Naive thymus-derived CD4-positive, alpha-beta T cell (primary cell): ENCODE measurements at regions of chr12 and their contacts with region 1.

Region 1: DNA sequence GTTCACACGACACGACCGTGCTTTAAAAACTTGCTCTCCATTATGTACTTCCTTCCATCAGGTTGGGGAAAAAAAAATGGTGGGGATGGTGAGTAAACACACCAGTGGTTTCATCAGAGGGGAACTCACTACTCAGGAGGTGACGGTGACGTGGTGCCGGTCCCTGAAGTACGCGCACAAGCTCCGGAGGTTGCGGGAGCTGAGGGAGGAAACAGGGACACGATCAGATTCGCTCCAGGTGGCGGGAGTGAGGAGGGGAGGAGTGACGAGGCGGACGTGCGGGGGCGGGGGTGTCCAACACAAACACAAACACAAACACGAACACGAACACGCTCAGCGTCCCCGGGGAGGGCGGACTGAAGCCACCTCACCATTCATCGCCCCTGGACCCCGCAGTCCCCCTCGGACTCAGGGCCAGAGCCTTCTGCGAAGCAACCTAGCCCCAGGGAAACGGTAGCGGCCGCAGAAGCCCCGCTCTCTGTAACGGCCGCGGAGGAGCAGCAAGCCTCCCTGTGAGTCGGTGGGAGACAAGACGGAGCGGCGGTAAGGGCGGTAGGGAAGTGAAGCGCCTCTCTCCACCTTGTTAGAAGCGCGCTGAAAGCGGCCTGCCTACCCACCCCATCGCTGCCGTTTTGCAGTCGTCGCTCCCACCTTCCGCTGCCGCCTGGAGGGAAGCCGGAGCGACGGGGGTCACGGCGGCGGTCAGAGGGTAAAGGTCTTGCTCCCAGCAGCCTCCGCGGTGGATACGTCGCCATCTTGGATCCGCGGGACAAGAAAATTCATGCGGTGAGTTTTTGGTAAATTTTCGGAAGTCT is at the start of gene CNOT2:
- DNase-seq: peak; percentile 76 to 91 (median 90)
- ATAC-seq: peak; percentile 89
- H3K4me3 ChIP-seq: peak within 1 kb of the TSS; percentile 80
- H3K4me3 Mint-ChIP-seq: peak within 1 kb of the TSS; percentile 96 to 100 (median 98)
- H3K27ac ChIP-seq: peak within 1 kb of the TSS; percentile 99
- H3K27ac Mint-ChIP-seq: peak within 1 kb of the TSS; percentile 94 to 100 (median 99)
- H3K4me1 ChIP-seq: peaks cover 33 to 41% of the 10 kb centered on the region in 2 donors
- H3K4me1 Mint-ChIP-seq: peaks cover 43 to 77% (median 70%) of the 10 kb centered on the region in 7 donors
- H3K27me3 ChIP-seq: no peaks in the 10 kb centered on the region
- H3K27me3 Mint-ChIP-seq: peaks cover 0 to 3% (median 0%) of the 10 kb centered on the region in 5 donors
- total RNA-seq, gene CNOT2: 76.2 to 144 (median 116) TPM

Region 2: DNA sequence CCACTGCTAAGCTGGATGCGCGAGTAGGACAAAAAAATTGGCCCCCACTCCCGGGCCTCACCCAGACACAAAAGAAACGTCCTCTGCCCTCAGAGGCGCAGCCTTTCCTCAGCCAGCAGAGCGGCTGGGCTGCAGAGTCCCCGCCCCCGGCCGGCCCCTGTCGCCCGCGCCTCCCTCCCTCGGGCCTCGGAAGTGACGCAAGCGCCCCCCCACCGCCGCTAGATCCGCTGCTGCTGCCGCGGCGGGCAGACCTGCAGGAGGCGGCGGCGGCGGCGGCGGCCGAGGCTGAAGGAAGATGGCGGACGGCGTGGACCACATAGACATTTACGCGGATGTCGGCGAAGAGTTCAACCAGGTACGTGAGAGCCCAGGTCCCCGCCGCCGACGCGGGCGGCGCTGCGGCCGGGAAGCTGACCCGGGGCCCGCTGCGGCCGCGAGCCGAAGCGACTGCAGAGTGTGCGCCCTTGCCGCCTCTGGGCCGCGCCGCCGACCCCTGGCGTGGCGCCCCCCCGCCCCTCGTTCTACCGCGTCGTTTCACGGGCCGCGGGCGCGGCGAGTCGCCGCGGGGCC is 1003.5 kb before region 1 on chr12 and contains the start of gene CPSF6:
- CTCF ChIA-PET with region 1: no interaction called
- POLR2A ChIA-PET with region 1: no interaction called
- intact Hi-C with region 1: loop called (anchors 2 to 5 kb)
- DNase-seq: peak; percentile 93 to 97 (median 95)
- ATAC-seq: peak; percentile 96
- H3K4me3 ChIP-seq: peak within 1 kb of the TSS; percentile 86
- H3K4me3 Mint-ChIP-seq: peak within 1 kb of the TSS; percentile 94 to 100 (median 98)
- H3K27ac ChIP-seq: peak within 1 kb of the TSS; percentile 90
- H3K27ac Mint-ChIP-seq: peak within 1 kb of the TSS; percentile 96 to 100 (median 99)
- H3K4me1 ChIP-seq: peaks cover 32 to 37% of the 10 kb centered on the region in 2 donors
- H3K4me1 Mint-ChIP-seq: peaks cover 32 to 58% (median 54%) of the 10 kb centered on the region in 7 donors
- H3K27me3 ChIP-seq: no peaks in the 10 kb centered on the region
- H3K27me3 Mint-ChIP-seq: no peaks in the 10 kb centered on the region
- total RNA-seq, gene CPSF6: 86.8 to 127 (median 96.5) TPM

Region 3: GRCh38 chr12:69470189-69471075 is 772.5 kb before region 1 on chr12 and contains the start of gene FRS2:
- CTCF ChIA-PET with region 1: no interaction called
- POLR2A ChIA-PET with region 1: no interaction called
- intact Hi-C with region 1: loop called in 1 of 2 experiments (anchors 1 kb)
- DNase-seq: peak; percentile 66 to 87 (median 81)
- ATAC-seq: peak; percentile 99
- H3K4me3 ChIP-seq: peak within 1 kb of the TSS; percentile 80
- H3K4me3 Mint-ChIP-seq: peak within 1 kb of the TSS; percentile 91 to 100 (median 96)
- H3K27ac ChIP-seq: peak within 1 kb of the TSS; percentile 94
- H3K27ac Mint-ChIP-seq: peak within 1 kb of the TSS; percentile 91 to 99 (median 97)
- H3K4me1 ChIP-seq: peaks cover 11 to 12% of the 10 kb centered on the region in 2 donors
- H3K4me1 Mint-ChIP-seq: peaks cover 41 to 60% (median 51%) of the 10 kb centered on the region in 7 donors
- H3K27me3 ChIP-seq: no peaks in the 10 kb centered on the region
- H3K27me3 Mint-ChIP-seq: no peaks in the 10 kb centered on the region
- total RNA-seq, gene FRS2: 17.5 to 30.1 (median 24.0) TPM

Region 4: DNA sequence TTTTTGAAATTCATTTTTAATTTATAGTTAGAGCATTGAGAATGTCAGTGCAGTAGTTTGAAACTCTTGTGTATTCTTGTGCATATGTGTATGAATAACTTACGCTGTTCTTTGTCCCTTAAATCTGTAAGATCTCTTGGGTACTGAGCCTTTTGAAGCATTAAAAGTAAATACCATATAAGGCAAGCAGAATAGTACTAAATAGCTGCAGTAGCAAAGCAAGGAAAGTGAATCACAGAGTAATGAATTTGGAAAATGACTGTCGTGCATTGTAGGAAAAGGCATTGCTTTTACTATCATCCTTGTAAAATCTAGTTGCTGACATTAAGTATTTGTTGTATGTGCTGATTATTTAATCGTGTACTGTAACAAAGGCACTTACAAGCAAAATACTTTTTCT is 12.4 kb after region 1 on chr12:
- CTCF ChIA-PET with region 1: no interaction called
- POLR2A ChIA-PET with region 1: interaction called, 4 read pairs
- intact Hi-C with region 1: loop called in 1 of 2 experiments (anchors 1 kb)
- DNase-seq: no peak
- ATAC-seq: no peak
- H3K4me3 ChIP-seq: no peak overlapping the region
- H3K4me3 Mint-ChIP-seq: peak overlapping the region in 7 of 10 donors; percentile 12 to 65 (median 49)
- H3K27ac ChIP-seq: no peak overlapping the region
- H3K27ac Mint-ChIP-seq: peak overlapping the region in 4 of 9 donors; percentile 29 to 49 (median 40)
- H3K4me1 ChIP-seq: peaks cover 25 to 32% of the 10 kb centered on the region in 2 donors
- H3K4me1 Mint-ChIP-seq: peaks cover 39 to 96% (median 90%) of the 10 kb centered on the region in 7 donors
- H3K27me3 ChIP-seq: no peaks in the 10 kb centered on the region
- H3K27me3 Mint-ChIP-seq: no peaks in the 10 kb centered on the region

Region 5: DNA sequence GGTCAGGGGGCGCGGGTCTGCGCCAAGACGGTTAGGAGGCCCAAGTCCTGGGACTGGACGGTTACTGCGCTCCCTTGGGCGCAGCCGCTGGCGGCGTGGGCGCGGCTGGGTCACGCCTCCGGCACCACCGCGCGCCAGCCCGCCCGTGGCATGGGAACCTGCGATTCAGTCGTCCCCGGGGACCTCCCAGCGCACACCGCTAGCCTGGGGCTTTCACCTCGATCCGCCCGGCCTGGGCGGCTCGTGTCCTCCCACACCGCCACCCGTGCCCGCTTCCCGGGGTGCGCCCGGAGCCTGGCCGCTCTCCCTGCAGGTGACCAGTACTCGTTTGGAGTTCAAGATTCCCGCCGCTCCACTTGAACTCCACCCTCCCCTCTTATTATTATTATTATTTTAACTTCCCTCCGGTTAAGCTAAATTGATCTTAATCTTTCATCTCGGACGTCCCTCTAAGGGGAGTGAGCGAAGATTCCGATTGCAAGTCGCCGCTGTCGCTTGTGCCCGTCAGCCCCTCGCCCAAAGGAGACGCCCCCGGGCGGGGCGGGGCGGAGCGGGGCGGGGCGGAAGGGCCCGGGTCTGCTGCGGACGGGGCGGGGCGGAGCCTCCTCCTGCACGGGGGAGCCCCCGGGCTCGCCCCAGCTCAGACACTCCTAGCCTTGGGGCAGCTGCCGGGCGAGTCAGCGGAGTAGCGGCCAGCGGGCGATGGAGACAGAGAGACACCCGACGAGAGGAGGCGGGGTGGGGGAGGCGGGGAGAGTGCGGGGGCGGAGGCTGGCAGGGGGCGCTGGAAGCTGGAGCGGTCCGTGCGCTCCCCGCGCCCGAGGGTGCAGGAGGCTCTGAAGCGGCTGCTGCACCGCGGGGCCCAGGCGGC is 123.0 kb after region 1 on chr12 and contains the start of gene KCNMB4:
- CTCF ChIA-PET with region 1: interaction called, 4 read pairs
- POLR2A ChIA-PET with region 1: interaction called, 13 read pairs
- intact Hi-C with region 1: loop called (anchors 1 kb)
- DNase-seq: peak; percentile 48 to 85 (median 68)
- ATAC-seq: peak; percentile 86
- H3K4me3 ChIP-seq: peak within 1 kb of the TSS; percentile 70
- H3K4me3 Mint-ChIP-seq: peak within 1 kb of the TSS; percentile 94 to 99 (median 97)
- H3K27ac ChIP-seq: peak within 1 kb of the TSS; percentile 71
- H3K27ac Mint-ChIP-seq: peak within 1 kb of the TSS; percentile 58 to 91 (median 89)
- H3K4me1 ChIP-seq: peaks cover 16 to 19% of the 10 kb centered on the region in 2 donors
- H3K4me1 Mint-ChIP-seq: peaks cover 12 to 41% (median 34%) of the 10 kb centered on the region in 7 donors
- H3K27me3 ChIP-seq: peaks cover 0 to 4% of the 10 kb centered on the region in 2 donors
- H3K27me3 Mint-ChIP-seq: peaks cover 0 to 54% (median 0%) of the 10 kb centered on the region in 5 donors
- total RNA-seq, gene KCNMB4: 0.31 to 1.9 (median 1.4) TPM

Region 6: GRCh38 chr12:70520847-70521246 is 277.9 kb after region 1 on chr12:
- CTCF ChIA-PET with region 1: no interaction called
- POLR2A ChIA-PET with region 1: no interaction called
- intact Hi-C with region 1: no loop called
- DNase-seq: no peak
- ATAC-seq: no peak
- H3K4me3 ChIP-seq: no peak overlapping the region
- H3K4me3 Mint-ChIP-seq: no peak overlapping the region
- H3K27ac ChIP-seq: no peak overlapping the region
- H3K27ac Mint-ChIP-seq: no peak overlapping the region
- H3K4me1 ChIP-seq: no peaks in the 10 kb centered on the region
- H3K4me1 Mint-ChIP-seq: no peaks in the 10 kb centered on the region
- H3K27me3 ChIP-seq: no peaks in the 10 kb centered on the region
- H3K27me3 Mint-ChIP-seq: peaks cover 0 to 14% (median 6%) of the 10 kb centered on the region in 5 donors

Region 7: DNA sequence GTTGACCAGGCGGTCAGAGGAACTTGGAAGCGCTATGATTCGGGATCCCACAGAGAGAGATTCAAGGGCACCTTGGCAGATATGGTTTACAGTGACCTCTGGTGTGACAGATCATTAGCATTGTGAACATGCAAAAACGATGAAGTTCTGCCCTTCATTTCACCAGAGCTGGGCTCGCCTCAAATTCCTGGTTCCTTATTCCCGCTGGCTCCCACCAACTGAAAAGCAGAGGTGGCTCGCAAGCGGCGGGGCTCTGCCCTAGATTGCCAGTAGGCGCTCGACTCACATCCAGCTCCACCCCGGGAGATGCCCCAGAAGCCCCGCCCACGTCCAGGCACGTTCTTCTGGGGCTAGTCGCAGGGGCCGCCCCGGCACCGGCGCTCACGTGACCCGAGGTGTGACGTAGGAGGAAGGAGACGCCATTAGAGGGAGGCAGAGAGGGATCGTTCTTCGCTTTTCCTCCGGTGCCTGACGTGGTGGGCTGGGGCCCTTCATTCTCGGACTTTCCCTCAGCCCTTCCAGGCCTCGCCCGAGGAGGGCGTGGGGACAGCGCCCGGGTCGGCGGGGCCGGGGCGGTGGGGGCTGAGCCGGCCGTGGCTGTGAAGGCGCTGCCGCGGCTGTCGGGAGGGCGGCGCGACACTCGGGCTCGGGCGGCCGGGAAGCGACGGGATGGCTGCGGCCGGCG is 1511.7 kb after region 1 on chr12 and contains the start of gene RAB21:
- CTCF ChIA-PET with region 1: no interaction called
- POLR2A ChIA-PET with region 1: no interaction called
- intact Hi-C with region 1: loop called (anchors 2 to 10 kb)
- DNase-seq: peak; percentile 95 to 99 (median 97)
- ATAC-seq: peak; percentile 94
- H3K4me3 ChIP-seq: peak within 1 kb of the TSS; percentile 70
- H3K4me3 Mint-ChIP-seq: peak within 1 kb of the TSS; percentile 86 to 95 (median 94)
- H3K27ac ChIP-seq: peak within 1 kb of the TSS; percentile 100
- H3K27ac Mint-ChIP-seq: peak within 1 kb of the TSS; percentile 91 to 98 (median 95)
- H3K4me1 ChIP-seq: peaks cover 10 to 11% of the 10 kb centered on the region in 2 donors
- H3K4me1 Mint-ChIP-seq: peaks cover 21 to 47% (median 43%) of the 10 kb centered on the region in 7 donors
- H3K27me3 ChIP-seq: no peaks in the 10 kb centered on the region
- H3K27me3 Mint-ChIP-seq: peaks cover 0 to 32% (median 5%) of the 10 kb centered on the region in 5 donors
- total RNA-seq, gene RAB21: 53.6 to 81.7 (median 73.7) TPM